ENCODE measurements at regions of chr14 and their contacts with region 1.

Region 1: GRCh38 chr14:76767681-76768656 is 6.7 kb downstream of the VASH1 start:
- DNase-seq: no peak
- ATAC-seq: no peak
- H3K4me3 ChIP-seq: no peak overlapping the region
- H3K27ac ChIP-seq: no peak overlapping the region
- H3K4me1 ChIP-seq: peaks cover 5 to 8% of the 10 kb centered on the region in 2 experiments
- H3K27me3 ChIP-seq: no peaks in the 10 kb centered on the region
- CTCF ChIP-seq: no peak
- POLR2A ChIP-seq: no peak
- RAD21 ChIP-seq: no peak

Region 2: DNA sequence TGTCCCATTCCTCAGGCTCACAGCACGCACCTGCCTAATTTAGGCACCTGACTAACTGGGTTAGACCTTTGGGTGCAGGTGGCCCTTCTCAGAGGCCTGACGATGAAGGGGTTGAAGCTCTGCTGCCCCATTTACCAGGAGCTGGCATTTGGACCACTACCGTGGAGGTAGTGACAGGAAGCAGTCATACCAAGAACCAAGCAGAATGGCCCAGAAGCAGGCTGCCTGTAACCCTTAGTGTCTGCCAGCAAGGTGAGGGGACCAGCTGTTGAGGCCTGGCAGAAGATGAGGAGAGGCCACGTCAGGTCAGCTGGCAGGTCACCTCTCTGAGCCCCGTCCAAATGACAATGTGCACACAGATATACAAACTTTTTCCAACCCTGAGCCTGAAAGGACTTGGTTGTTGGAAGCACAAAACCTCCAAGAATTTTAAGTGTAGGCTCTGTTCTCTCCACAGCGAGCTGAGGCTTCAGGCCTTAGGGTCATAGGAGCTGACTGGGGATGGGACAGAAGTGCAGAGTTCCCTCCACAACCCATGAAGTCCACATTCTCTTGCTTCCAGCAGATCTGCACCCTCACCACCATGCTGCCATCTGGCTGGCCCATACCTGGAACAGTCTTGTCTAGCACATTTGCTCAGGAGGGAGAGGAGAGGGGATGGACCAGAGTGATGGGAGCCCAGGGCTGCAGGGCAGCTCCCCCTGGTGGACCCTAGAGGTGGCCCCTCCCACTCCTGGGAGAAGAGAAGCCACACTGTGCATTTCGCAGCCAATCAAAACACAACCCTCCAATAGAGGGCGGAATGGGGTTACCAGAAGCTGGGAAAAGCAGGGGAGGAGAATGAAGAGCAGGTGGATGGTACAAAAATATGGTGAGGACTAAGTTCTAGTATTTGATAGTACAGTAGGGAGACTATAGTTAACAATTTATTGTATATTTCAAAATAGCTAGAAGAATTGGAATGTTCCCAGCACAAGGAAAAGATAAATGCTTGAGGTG is 16.6 kb after region 1 on chr14:
- CTCF ChIA-PET with region 1: interaction called, 12 read pairs
- POLR2A ChIA-PET with region 1: no interaction called
- RAD21 ChIA-PET with region 1: no interaction called
- intact Hi-C with region 1: no loop called
- DNase-seq: peak; percentile 60
- ATAC-seq: peak; percentile 100
- H3K4me3 ChIP-seq: no peak overlapping the region
- H3K27ac ChIP-seq: no peak overlapping the region
- H3K4me1 ChIP-seq: no peaks in the 10 kb centered on the region
- H3K27me3 ChIP-seq: no peaks in the 10 kb centered on the region
- CTCF ChIP-seq: peak; percentile 97 to 99 (median 98)
- POLR2A ChIP-seq: no peak
- RAD21 ChIP-seq: peak; percentile 80

Region 3: GRCh38 chr14:76876076-76876475 is 108.1 kb after region 1 on chr14:
- CTCF ChIA-PET with region 1: no interaction called
- POLR2A ChIA-PET with region 1: no interaction called
- RAD21 ChIA-PET with region 1: no interaction called
- intact Hi-C with region 1: no loop called
- DNase-seq: peak; percentile 81
- ATAC-seq: peak; percentile 95
- H3K4me3 ChIP-seq: no peak overlapping the region
- H3K27ac ChIP-seq: no peak overlapping the region
- H3K4me1 ChIP-seq: peaks cover 0 to 9% of the 10 kb centered on the region in 2 experiments; a peak in 3 of 4 replicates
- H3K27me3 ChIP-seq: no peaks in the 10 kb centered on the region
- CTCF ChIP-seq: peak; percentile 96 to 98 (median 97)
- POLR2A ChIP-seq: no peak
- RAD21 ChIP-seq: peak; percentile 100

Region 4: GRCh38 chr14:77000340-77001270 is 232.6 kb after region 1 on chr14:
- CTCF ChIA-PET with region 1: no interaction called
- POLR2A ChIA-PET with region 1: no interaction called
- RAD21 ChIA-PET with region 1: no interaction called
- intact Hi-C with region 1: no loop called
- DNase-seq: no peak
- ATAC-seq: no peak
- H3K4me3 ChIP-seq: no peak overlapping the region
- H3K27ac ChIP-seq: no peak overlapping the region
- H3K4me1 ChIP-seq: peaks cover 17 to 32% of the 10 kb centered on the region in 2 experiments; a peak in 3 of 4 replicates
- H3K27me3 ChIP-seq: no peaks in the 10 kb centered on the region
- CTCF ChIP-seq: no peak
- POLR2A ChIP-seq: no peak
- RAD21 ChIP-seq: no peak